CD8-positive, alpha-beta T cell (primary cell): ENCODE measurements at regions of chr7 and their contacts with region 1.

Region 1: GRCh38 chr7:8965177-8965576 is 531.8 kb downstream of the NXPH1 start:
- DNase-seq: no peak
- ATAC-seq: no peak
- H3K4me3 ChIP-seq: no peak overlapping the region
- H3K4me3 Mint-ChIP-seq: no peak overlapping the region
- H3K27ac ChIP-seq: no peak overlapping the region
- H3K27ac Mint-ChIP-seq: no peak overlapping the region
- H3K4me1 ChIP-seq: no peaks in the 10 kb centered on the region
- H3K4me1 Mint-ChIP-seq: no peaks in the 10 kb centered on the region
- H3K27me3 ChIP-seq: no peaks in the 10 kb centered on the region
- H3K27me3 Mint-ChIP-seq: no peaks in the 10 kb centered on the region
- CTCF ChIP-seq: no peak

Region 2: DNA sequence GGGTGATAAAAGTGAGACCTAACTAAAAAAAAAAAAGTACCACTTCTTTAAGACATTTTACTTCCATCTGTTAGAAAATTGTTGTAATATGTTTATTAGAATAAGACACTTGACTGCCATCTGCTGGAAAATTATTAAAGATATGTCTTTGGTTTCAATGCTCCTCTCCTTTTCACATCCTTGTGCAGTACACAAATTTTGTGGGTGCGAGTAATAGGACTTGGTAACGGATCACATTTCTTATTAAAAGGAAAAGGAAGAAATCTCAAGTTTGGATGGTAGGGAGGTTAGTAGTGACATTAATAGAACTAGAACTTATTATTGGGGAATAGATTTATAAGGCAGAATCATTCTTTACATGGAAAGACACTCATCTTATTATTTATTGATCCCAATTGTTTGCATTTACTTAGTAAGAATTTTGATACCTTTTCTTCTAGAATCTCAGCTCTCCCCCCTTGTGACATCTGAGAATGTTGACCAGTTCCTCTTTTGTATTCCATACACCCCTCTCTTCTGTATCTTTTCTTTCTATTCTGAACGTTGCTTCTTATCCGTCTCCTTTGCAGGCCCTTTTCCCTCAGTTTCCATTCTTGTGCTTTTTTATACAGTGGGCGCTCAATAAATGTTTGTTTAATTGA is 1203.7 kb before region 1 on chr7:
- CTCF ChIA-PET with region 1: no interaction called
- POLR2A ChIA-PET with region 1: no interaction called
- intact Hi-C with region 1: no loop called
- DNase-seq: peak in 2 of 9 experiments; percentile 61 to 68
- ATAC-seq: peak; percentile 24
- H3K4me3 ChIP-seq: peak overlapping the region; percentile 49 to 52
- H3K4me3 Mint-ChIP-seq: peak overlapping the region; percentile 93
- H3K27ac ChIP-seq: peak overlapping the region; percentile 52 to 80
- H3K27ac Mint-ChIP-seq: peak overlapping the region; percentile 98
- H3K4me1 ChIP-seq: peaks cover 29% of the 10 kb centered on the region
- H3K4me1 Mint-ChIP-seq: peaks cover 46% of the 10 kb centered on the region
- H3K27me3 ChIP-seq: no peaks in the 10 kb centered on the region
- H3K27me3 Mint-ChIP-seq: no peaks in the 10 kb centered on the region
- CTCF ChIP-seq: peak; percentile 46

Region 3: GRCh38 chr7:8982338-8982992 is 17.3 kb after region 1 on chr7:
- CTCF ChIA-PET with region 1: no interaction called
- POLR2A ChIA-PET with region 1: no interaction called
- intact Hi-C with region 1: loop called in 1 of 2 experiments (anchors 2 kb)
- DNase-seq: no peak
- ATAC-seq: no peak
- H3K4me3 ChIP-seq: no peak overlapping the region
- H3K4me3 Mint-ChIP-seq: no peak overlapping the region
- H3K27ac ChIP-seq: no peak overlapping the region
- H3K27ac Mint-ChIP-seq: no peak overlapping the region
- H3K4me1 ChIP-seq: no peaks in the 10 kb centered on the region
- H3K4me1 Mint-ChIP-seq: no peaks in the 10 kb centered on the region
- H3K27me3 ChIP-seq: no peaks in the 10 kb centered on the region
- H3K27me3 Mint-ChIP-seq: no peaks in the 10 kb centered on the region
- CTCF ChIP-seq: no peak

Region 4: GRCh38 chr7:9083829-9084228 is 118.7 kb after region 1 on chr7:
- CTCF ChIA-PET with region 1: no interaction called
- POLR2A ChIA-PET with region 1: no interaction called
- intact Hi-C with region 1: no loop called
- DNase-seq: no peak
- ATAC-seq: no peak
- H3K4me3 ChIP-seq: no peak overlapping the region
- H3K4me3 Mint-ChIP-seq: no peak overlapping the region
- H3K27ac ChIP-seq: no peak overlapping the region
- H3K27ac Mint-ChIP-seq: no peak overlapping the region
- H3K4me1 ChIP-seq: no peaks in the 10 kb centered on the region
- H3K4me1 Mint-ChIP-seq: no peaks in the 10 kb centered on the region
- H3K27me3 ChIP-seq: no peaks in the 10 kb centered on the region
- H3K27me3 Mint-ChIP-seq: no peaks in the 10 kb centered on the region
- CTCF ChIP-seq: no peak